CD8-positive, alpha-beta T cell (primary cell): ENCODE measurements at regions of chr3 and their contacts with region 1.

Region 1: DNA sequence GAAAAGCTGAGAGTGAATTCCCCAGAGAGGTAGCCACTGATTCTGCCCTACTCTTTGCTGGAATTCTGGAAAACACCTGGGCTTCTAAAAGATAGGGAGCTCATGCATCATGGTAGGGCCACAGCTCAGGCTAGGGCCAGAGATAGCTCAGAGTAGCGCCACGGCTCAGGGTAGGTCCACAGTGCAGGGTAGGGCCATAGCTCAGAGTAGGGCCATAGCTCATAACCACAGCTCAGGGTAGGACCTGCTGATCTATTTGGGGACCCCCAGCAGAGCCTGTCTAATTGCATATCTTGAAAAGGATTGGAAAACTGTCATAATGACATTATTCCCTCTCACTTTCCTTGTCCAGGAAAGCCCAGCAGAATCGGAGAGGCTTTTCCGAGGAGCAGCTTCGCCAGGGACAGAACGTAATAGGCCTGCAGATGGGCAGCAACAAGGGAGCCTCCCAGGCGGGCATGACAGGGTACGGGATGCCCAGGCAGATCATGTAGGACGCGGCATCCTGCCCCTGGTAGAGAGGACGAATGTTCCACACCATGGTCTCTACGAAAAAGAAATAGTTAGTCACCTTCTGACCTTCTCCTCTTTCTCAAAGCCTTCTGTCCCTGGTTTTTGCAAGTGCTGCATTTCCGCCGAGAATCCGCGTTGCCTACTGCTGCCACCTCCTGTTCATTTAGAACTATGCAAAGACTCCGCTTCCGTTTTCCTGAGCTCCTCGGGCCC is 14.5 kb downstream of the TAGLN3 start:
- DNase-seq: peak; percentile 9 to 72 (median 51)
- ATAC-seq: peak; percentile 79
- H3K4me3 ChIP-seq: no peak overlapping the region
- H3K4me3 Mint-ChIP-seq: no peak overlapping the region
- H3K27ac ChIP-seq: no peak overlapping the region
- H3K27ac Mint-ChIP-seq: no peak overlapping the region
- H3K4me1 ChIP-seq: peaks cover 2% of the 10 kb centered on the region
- H3K4me1 Mint-ChIP-seq: peaks cover 6% of the 10 kb centered on the region
- H3K27me3 ChIP-seq: no peaks in the 10 kb centered on the region
- H3K27me3 Mint-ChIP-seq: no peaks in the 10 kb centered on the region
- CTCF ChIP-seq: peak; percentile 69

Region 2: DNA sequence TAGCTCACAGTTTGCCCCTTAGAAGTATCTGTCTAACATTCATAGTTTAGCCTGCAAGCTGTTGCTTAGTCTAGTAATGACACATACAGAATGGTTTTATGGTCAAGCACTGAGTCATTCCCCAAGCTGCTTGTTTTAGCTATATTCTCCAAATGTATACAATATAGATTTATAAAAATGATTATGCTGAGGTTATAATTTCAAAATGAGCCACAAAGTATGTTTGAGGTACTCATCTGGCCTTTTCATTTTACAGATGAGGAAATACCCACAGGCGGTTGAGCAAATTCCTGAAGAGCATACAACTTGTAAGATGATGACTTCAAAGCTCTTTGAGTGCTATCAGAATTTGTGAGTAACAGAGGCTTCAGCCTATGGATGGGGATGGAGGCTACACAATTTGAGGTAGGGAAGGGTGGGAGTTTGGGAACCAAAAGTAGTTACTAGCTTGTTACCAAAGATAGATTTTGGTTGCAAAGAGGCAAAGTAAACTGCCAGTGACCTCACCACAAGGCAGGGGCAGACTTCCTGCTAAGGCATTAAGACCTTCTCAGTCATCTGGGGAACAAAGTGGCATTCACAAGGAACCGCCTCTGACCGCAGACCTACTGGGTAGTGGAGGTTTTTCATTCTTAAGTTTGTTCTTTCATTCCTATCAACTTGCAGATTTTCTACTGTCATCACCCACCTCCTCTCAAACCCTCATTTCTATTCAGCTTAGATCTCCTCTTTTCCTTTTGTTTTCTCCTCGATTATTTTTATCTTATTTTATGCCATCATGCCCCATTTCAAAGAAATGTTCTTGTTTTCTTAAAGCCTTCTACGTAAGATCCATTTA is 1198.8 kb before region 1 on chr3:
- CTCF ChIA-PET with region 1: no interaction called
- POLR2A ChIA-PET with region 1: no interaction called
- intact Hi-C with region 1: no loop called
- DNase-seq: peak in 3 of 9 experiments; percentile 21 to 48 (median 26)
- ATAC-seq: peak; percentile 26
- H3K4me3 ChIP-seq: no peak overlapping the region
- H3K4me3 Mint-ChIP-seq: no peak overlapping the region
- H3K27ac ChIP-seq: no peak overlapping the region
- H3K27ac Mint-ChIP-seq: no peak overlapping the region
- H3K4me1 ChIP-seq: peaks cover 5% of the 10 kb centered on the region
- H3K4me1 Mint-ChIP-seq: peaks cover 4% of the 10 kb centered on the region
- H3K27me3 ChIP-seq: no peaks in the 10 kb centered on the region
- H3K27me3 Mint-ChIP-seq: peaks cover 13% of the 10 kb centered on the region
- CTCF ChIP-seq: no peak

Region 3: GRCh38 chr3:111485086-111485485 is 528.1 kb before region 1 on chr3:
- CTCF ChIA-PET with region 1: no interaction called
- POLR2A ChIA-PET with region 1: no interaction called
- intact Hi-C with region 1: no loop called
- DNase-seq: no peak
- ATAC-seq: no peak
- H3K4me3 ChIP-seq: no peak overlapping the region
- H3K4me3 Mint-ChIP-seq: no peak overlapping the region
- H3K27ac ChIP-seq: no peak overlapping the region
- H3K27ac Mint-ChIP-seq: no peak overlapping the region
- H3K4me1 ChIP-seq: no peaks in the 10 kb centered on the region
- H3K4me1 Mint-ChIP-seq: no peaks in the 10 kb centered on the region
- H3K27me3 ChIP-seq: no peaks in the 10 kb centered on the region
- H3K27me3 Mint-ChIP-seq: no peaks in the 10 kb centered on the region
- CTCF ChIP-seq: no peak

Region 4: DNA sequence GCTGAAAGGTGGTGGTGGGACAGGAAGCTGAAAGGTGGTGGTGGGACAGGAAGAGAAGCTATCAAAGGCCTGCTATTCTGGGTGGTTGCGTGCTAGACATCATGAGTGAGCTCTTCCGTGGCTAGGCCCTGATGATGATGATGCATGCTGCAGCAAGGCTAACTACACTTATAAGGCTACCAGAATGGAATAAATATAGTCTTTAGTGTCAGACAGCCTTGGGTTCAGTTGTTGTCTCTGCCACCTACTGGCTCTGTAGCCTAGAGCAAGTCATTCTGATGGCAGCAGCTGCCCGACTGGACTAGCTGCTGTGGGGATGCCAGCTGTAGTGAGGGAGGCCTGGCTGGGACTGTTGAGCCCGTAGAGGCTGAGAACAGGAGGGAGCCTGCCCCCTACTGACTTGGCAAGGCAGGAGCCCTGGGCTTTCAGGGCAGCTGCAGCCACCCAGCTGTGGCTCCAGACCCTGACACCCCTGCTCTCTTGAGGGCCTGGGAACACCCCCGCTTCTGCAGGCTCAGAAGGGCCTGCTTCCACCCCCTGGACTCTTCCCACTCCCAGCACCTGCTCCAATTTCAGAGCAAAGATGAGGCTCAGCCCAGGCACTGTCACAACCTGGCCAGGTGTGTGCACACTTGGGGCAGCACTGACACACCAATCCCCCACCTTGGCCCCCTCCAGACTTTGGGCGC is 396.7 kb before region 1 on chr3:
- CTCF ChIA-PET with region 1: no interaction called
- POLR2A ChIA-PET with region 1: no interaction called
- intact Hi-C with region 1: no loop called
- DNase-seq: peak; percentile 24 to 91 (median 63)
- ATAC-seq: peak; percentile 93
- H3K4me3 ChIP-seq: no peak overlapping the region
- H3K4me3 Mint-ChIP-seq: peak overlapping the region; percentile 24
- H3K27ac ChIP-seq: peak overlapping the region; percentile 42 to 79
- H3K27ac Mint-ChIP-seq: peak overlapping the region; percentile 95
- H3K4me1 ChIP-seq: peaks cover 38% of the 10 kb centered on the region
- H3K4me1 Mint-ChIP-seq: peaks cover 55% of the 10 kb centered on the region
- H3K27me3 ChIP-seq: no peaks in the 10 kb centered on the region
- H3K27me3 Mint-ChIP-seq: no peaks in the 10 kb centered on the region
- CTCF ChIP-seq: peak; percentile 60

Region 5: DNA sequence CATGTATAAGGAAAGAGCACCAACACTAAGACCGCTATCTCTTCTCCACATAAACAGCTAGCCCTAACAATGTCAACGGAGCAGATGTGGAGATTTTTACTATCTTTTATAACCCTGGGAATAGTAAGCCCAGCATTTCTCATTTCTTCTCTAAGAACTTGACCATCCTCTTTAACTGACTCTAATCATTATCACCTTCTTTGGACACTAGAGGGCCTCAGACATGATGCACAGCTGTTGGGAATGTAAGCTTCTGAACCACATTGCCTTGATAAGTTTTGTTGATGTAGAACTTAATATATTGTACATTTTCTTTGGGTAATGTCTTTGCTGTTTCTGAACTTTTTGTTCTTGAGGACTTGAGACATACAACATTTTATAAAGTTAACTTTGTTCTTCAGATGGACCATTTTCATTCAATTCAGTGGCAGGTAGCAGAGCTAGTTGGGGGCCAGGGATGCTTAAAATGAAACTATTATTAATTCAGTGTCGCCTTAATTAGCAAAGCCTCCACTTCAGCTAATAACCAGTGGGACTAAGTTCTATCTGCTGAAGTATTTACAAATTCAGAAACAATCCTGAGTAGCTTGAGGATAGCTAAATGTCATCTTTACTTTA is 24.1 kb before region 1 on chr3:
- CTCF ChIA-PET with region 1: interaction called, 77 read pairs
- POLR2A ChIA-PET with region 1: interaction called, 4 read pairs
- intact Hi-C with region 1: loop called (anchors 1 to 2 kb)
- DNase-seq: peak in 2 of 9 experiments; percentile 53 to 64
- ATAC-seq: peak; percentile 72
- H3K4me3 ChIP-seq: no peak overlapping the region
- H3K4me3 Mint-ChIP-seq: peak overlapping the region; percentile 38
- H3K27ac ChIP-seq: no peak overlapping the region
- H3K27ac Mint-ChIP-seq: no peak overlapping the region
- H3K4me1 ChIP-seq: peaks cover 3% of the 10 kb centered on the region
- H3K4me1 Mint-ChIP-seq: peaks cover 39% of the 10 kb centered on the region
- H3K27me3 ChIP-seq: no peaks in the 10 kb centered on the region
- H3K27me3 Mint-ChIP-seq: no peaks in the 10 kb centered on the region
- CTCF ChIP-seq: peak; percentile 61

Region 6: DNA sequence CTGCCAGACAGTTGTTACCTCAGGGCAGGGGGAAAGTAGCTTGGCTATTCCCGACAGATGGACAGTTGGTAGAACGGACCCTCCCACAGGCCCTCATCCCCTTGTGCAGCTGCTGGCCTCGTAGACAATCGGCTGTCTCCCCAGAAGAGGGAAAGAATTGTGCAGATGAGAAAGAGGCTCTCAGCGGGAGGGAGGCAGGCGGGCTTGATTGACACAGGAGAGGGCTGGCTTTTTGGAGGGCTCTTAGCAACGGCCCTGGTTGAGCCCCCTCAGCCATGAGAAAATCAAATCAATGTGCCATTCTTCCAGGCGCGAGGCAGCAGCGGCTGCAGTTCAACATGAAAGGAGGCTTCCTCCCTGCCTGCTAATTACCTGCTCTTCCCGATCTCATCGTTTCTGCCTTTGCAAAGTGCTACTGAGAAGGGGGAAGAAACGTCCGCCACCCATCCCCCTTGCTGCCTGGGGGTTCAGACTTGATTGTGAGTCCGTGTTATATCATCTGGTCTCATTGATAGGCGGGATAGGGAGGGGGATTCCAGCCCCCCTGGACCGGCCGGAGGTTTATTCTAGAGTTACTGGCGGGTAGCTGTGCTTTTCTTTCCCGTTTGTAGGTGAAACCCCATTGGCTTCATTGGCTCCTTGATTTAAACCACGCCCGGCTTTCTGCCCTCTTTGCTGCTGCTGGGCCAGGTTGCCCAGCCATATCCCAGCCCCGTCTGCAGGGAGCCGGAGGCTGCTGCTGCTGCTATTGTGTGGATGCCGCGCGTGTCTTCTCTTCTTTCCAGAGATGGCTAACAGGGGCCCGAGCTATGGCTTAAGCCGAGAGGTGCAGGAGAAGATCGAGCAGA is 14.4 kb before region 1 on chr3 and contains the start of gene TAGLN3:
- CTCF ChIA-PET with region 1: interaction called, 82 read pairs
- POLR2A ChIA-PET with region 1: interaction called, 6 read pairs
- intact Hi-C with region 1: no loop called
- DNase-seq: no peak
- ATAC-seq: no peak
- H3K4me3 ChIP-seq: peak within 1 kb of the TSS; percentile 13 to 40
- H3K4me3 Mint-ChIP-seq: peak within 1 kb of the TSS; percentile 79
- H3K27ac ChIP-seq: no peak within 1 kb of the TSS
- H3K27ac Mint-ChIP-seq: no peak within 1 kb of the TSS
- H3K4me1 ChIP-seq: peaks cover 22% of the 10 kb centered on the region
- H3K4me1 Mint-ChIP-seq: peaks cover 34% of the 10 kb centered on the region
- H3K27me3 ChIP-seq: no peaks in the 10 kb centered on the region
- H3K27me3 Mint-ChIP-seq: no peaks in the 10 kb centered on the region
- CTCF ChIP-seq: no peak
- total RNA-seq, gene TAGLN3: not detected

Region 7: GRCh38 chr3:112247900-112248299 is 234.7 kb after region 1 on chr3:
- CTCF ChIA-PET with region 1: no interaction called
- POLR2A ChIA-PET with region 1: no interaction called
- intact Hi-C with region 1: no loop called
- DNase-seq: no peak
- ATAC-seq: no peak
- H3K4me3 ChIP-seq: no peak overlapping the region
- H3K4me3 Mint-ChIP-seq: no peak overlapping the region
- H3K27ac ChIP-seq: no peak overlapping the region
- H3K27ac Mint-ChIP-seq: no peak overlapping the region
- H3K4me1 ChIP-seq: no peaks in the 10 kb centered on the region
- H3K4me1 Mint-ChIP-seq: no peaks in the 10 kb centered on the region
- H3K27me3 ChIP-seq: no peaks in the 10 kb centered on the region
- H3K27me3 Mint-ChIP-seq: peaks cover 6% of the 10 kb centered on the region
- CTCF ChIP-seq: no peak